Upper lobe of right lung (tissue), 1 donor: ENCODE measurements at regions of chr19 and their contacts with region 1.

Region 1: GRCh38 chr19:15154002-15154612 is 46.7 kb downstream of the NOTCH3 start:
- DNase-seq: no peak
- ATAC-seq: peak; percentile 68
- H3K4me3 ChIP-seq: no peak overlapping the region
- H3K27ac ChIP-seq: no peak overlapping the region
- H3K4me1 ChIP-seq: no peaks in the 10 kb centered on the region
- H3K27me3 ChIP-seq: no peaks in the 10 kb centered on the region
- CTCF ChIP-seq: peak; percentile 54

Region 2: GRCh38 chr19:15091901-15092753 is 62.0 kb before region 1 on chr19:
- intact Hi-C with region 1: loop called (anchors 10 kb)
- DNase-seq: no peak
- ATAC-seq: peak; percentile 72
- H3K4me3 ChIP-seq: no peak overlapping the region
- H3K27ac ChIP-seq: no peak overlapping the region
- H3K4me1 ChIP-seq: no peaks in the 10 kb centered on the region
- H3K27me3 ChIP-seq: peaks cover 6% of the 10 kb centered on the region
- CTCF ChIP-seq: peak; percentile 68